T-cell (primary cell): ENCODE measurements at regions of chr1 and their contacts with region 1.

Region 1: DNA sequence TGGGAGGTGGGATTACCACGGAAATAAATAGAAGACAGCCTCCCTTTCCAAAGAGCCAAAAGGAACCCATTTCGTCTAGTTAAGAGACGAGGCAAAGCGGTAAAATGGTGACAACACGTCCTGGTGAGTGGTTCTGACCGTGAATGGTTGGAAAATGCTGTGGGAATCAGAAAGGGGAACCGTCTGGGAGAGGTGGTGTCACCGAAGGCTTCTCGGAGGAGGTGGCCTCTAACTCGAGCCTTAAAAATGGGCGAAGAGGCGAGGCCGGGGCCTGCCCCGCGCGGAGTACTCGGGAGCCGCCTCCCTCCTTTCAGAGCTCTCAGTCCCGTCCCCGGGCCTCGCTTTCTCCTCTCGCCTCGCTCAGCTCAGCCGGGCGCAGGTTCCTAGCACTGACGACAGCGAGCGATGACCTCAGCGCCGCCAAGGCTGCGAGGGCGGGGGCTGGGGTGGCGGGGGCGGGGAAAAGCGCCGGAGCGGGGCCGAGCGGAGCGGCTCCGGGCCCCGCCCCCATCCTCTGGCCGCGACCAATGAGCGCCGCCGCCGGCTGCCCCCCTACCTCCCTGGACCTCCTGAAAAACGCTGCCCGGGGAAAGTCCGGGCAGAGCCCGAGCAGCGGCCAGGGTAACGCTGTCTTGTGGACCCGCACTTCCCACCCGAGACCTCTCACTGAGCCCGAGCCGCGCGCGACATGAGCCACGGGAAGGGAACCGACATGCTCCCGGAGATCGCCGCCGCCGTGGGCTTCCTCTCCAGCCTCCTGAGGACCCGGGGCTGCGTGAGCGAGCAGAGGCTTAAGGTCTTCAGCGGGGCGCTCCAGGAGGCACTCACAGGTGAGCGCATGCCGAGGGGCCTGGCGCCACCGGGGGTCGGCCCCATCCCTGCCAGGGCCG is at the start of gene BTG2:
- DNase-seq: peak; percentile 76 to 96 (median 91)
- ATAC-seq: peak; percentile 81 to 83 (median 82)
- H3K4me3 ChIP-seq: peak within 1 kb of the TSS; percentile 100
- H3K4me3 Mint-ChIP-seq: peak within 1 kb of the TSS; percentile 94 to 100 (median 98)
- H3K27ac ChIP-seq: peak within 1 kb of the TSS; percentile 99
- H3K27ac Mint-ChIP-seq: peak within 1 kb of the TSS; percentile 94 to 97
- H3K4me1 ChIP-seq: peaks cover 24 to 55% of the 10 kb centered on the region in 2 experiments
- H3K4me1 Mint-ChIP-seq: peaks cover 56 to 70% (median 67%) of the 10 kb centered on the region in 3 donors
- H3K27me3 ChIP-seq: no peaks in the 10 kb centered on the region
- H3K27me3 Mint-ChIP-seq: no peaks in the 10 kb centered on the region
- total RNA-seq, gene BTG2: 172 to 655 (median 186) TPM

Region 2: DNA sequence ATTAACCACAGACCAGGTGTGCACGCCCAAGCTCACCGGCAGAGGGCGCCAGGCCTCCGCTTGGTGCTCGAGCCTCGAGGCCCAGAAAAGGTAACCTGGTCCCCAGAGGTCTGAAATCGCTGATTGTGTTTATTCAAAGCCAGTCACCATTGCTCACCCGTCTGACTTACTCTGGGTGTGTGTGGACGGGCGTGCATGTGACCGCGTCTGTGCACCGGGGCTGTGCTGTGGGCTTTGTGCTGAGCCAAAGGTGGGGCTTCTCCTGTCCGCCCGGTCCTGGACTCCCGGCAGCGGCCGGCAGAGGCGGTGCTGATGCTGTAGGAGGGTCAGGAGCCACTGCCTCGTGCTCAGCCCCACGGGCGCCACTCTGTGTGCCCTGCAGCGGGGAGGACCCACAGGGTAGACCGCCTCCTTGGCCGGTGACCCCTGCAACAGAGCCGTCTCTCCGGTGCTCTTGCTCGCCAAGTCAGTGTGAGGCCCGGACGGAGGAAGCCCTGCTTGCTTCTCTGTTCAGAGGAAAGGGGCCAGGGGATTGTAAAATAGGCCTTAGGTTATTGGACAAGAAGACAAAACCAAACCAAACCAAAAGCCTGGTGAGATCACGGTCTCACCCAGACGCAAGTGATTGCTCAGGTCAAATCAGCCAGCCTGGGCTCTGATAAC is 31.8 kb before region 1 on chr1:
- CTCF ChIA-PET with region 1: interaction called, 6 to 65 read pairs
- POLR2A ChIA-PET with region 1: interaction called, 8 to 15 read pairs
- DNase-seq: peak; percentile 74 to 95 (median 88)
- ATAC-seq: peak; percentile 69 to 73 (median 72)
- H3K4me3 ChIP-seq: peak overlapping the region; percentile 16 to 60
- H3K4me3 Mint-ChIP-seq: peak overlapping the region; percentile 67 to 78 (median 72)
- H3K27ac ChIP-seq: peak overlapping the region; percentile 43
- H3K27ac Mint-ChIP-seq: peak overlapping the region; percentile 82 to 86
- H3K4me1 ChIP-seq: peaks cover 38 to 73% of the 10 kb centered on the region in 2 experiments
- H3K4me1 Mint-ChIP-seq: peaks cover 50 to 68% (median 59%) of the 10 kb centered on the region in 3 donors
- H3K27me3 ChIP-seq: no peaks in the 10 kb centered on the region
- H3K27me3 Mint-ChIP-seq: no peaks in the 10 kb centered on the region

Region 3: DNA sequence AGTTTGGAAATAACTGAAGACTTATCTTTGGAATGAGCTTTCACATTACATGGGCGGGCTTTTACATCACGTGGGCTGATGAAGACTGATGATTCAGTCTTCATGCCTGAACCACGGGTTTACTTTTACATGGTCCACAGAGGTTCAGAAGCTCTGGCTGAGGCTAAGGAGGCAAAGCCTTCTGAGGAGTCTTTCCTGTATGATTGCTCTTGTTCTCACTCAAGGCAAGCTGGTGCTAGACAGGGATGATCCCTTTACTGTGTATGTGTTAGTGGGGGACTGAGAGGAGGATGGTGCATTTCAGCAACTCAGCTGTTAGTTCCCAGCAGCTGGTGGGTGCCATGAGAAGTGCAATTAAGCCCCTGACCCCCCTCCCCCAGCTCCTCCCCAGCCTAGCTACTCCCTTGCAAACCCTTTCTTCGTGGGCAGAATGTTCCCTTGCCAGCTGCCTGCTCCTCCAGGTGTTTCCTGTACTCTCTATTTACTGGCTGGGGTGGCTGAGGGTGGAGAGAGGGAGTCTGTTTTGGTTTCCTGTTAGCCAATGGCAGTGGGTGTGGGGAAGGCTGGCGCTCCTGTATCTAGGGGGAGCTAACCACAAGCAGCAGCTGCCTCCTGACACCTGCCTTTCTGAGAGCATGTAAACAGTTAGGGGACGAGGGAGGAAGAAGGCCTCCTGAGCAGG is 15.6 kb after region 1 on chr1:
- CTCF ChIA-PET with region 1: interaction called, 5 to 80 read pairs
- POLR2A ChIA-PET with region 1: interaction called, 183 to 366 read pairs
- DNase-seq: peak; percentile 64 to 93 (median 81)
- ATAC-seq: peak; percentile 74 to 83 (median 80)
- H3K4me3 ChIP-seq: no peak overlapping the region
- H3K4me3 Mint-ChIP-seq: peak overlapping the region; percentile 55 to 71 (median 70)
- H3K27ac ChIP-seq: peak overlapping the region; percentile 100
- H3K27ac Mint-ChIP-seq: peak overlapping the region; percentile 97
- H3K4me1 ChIP-seq: peaks cover 69 to 75% of the 10 kb centered on the region in 2 experiments
- H3K4me1 Mint-ChIP-seq: peaks cover 89 to 94% (median 94%) of the 10 kb centered on the region in 3 donors
- H3K27me3 ChIP-seq: no peaks in the 10 kb centered on the region
- H3K27me3 Mint-ChIP-seq: no peaks in the 10 kb centered on the region

Region 4: GRCh38 chr1:203340112-203340804 is 35.1 kb after region 1 on chr1:
- CTCF ChIA-PET with region 1: interaction called, 3 to 12 read pairs
- POLR2A ChIA-PET with region 1: interaction called, 11 to 15 read pairs
- DNase-seq: peak in 34 of 35 experiments; percentile 18 to 81 (median 41)
- ATAC-seq: peak; percentile 65 to 78 (median 72)
- H3K4me3 ChIP-seq: no peak overlapping the region
- H3K4me3 Mint-ChIP-seq: no peak overlapping the region
- H3K27ac ChIP-seq: no peak overlapping the region
- H3K27ac Mint-ChIP-seq: peak overlapping the region in 1 of 2 donors; percentile 38
- H3K4me1 ChIP-seq: peaks cover 5 to 27% of the 10 kb centered on the region in 2 experiments
- H3K4me1 Mint-ChIP-seq: peaks cover 39 to 42% (median 40%) of the 10 kb centered on the region in 3 donors
- H3K27me3 ChIP-seq: peaks cover 5 to 21% of the 10 kb centered on the region in 2 experiments
- H3K27me3 Mint-ChIP-seq: peaks cover 4 to 28% of the 10 kb centered on the region in 2 donors